ENCODE measurements at regions of chr5 and their contacts with region 1.

Region 1: GRCh38 chr5:88690409-88691229 is 192.4 kb downstream of the MEF2C start:
- DNase-seq: peak; percentile 82
- ATAC-seq: peak; percentile 82
- H3K4me3 Mint-ChIP-seq: peak overlapping the region; percentile 38
- H3K27ac Mint-ChIP-seq: no peak overlapping the region
- H3K4me1 Mint-ChIP-seq: peaks cover 15% of the 10 kb centered on the region
- H3K27me3 Mint-ChIP-seq: peaks cover 84% of the 10 kb centered on the region

Region 2: GRCh38 chr5:87421307-87421706 is 1269.3 kb before region 1 on chr5:
- CTCF ChIA-PET with region 1: interaction called, 3 read pairs
- POLR2A ChIA-PET with region 1: no interaction called
- intact Hi-C with region 1: loop called in 1 of 2 experiments (anchors 10 kb)
- DNase-seq: no peak
- ATAC-seq: no peak
- H3K4me3 Mint-ChIP-seq: no peak overlapping the region
- H3K27ac Mint-ChIP-seq: no peak overlapping the region
- H3K4me1 Mint-ChIP-seq: peaks cover 1% of the 10 kb centered on the region
- H3K27me3 Mint-ChIP-seq: no peaks in the 10 kb centered on the region

Region 3: DNA sequence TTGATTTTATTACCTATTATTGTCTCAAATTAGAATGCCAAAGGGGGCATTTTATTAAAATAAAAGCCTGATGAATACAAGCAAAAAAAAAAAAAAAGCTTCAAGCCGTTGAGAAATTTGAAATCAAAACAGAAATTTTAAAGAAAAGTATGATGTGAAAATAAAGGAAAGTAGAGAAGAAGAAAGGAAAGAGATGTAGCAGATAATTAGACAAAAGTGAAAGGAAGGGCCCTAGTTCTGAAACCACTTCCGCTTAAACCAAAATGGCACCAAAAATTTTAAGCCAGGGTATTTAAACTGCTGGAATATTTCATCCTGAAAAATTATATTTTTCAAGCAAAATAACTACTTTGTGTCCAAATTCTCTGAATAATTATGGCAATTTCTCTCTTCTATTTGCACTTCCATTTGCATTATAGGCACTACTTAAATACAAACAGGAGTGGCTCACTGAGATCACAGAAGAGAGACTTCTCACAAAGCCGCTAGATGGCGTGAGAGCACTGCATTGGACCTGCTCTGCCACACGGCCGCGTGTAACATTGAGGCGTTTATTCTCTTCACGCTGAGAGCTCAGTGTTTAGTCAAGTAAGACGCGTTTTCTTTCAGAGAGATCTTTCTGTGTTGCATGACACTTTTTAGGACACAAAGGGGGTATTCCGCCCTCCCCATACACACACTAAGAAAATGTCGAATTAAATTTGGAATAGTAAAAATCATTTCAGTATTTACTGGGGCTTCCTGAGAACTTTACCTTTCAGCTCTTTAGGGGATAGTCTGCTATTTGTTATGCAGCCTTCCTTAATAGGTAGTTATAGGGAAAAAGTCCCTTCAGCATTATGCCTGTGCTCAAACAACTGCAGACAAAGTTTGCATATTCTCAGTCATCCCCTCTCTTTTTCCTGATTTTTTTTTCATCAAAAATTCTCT is 909.5 kb before region 1 on chr5:
- CTCF ChIA-PET with region 1: interaction called, 59 read pairs
- POLR2A ChIA-PET with region 1: no interaction called
- intact Hi-C with region 1: loop called (anchors 1 kb)
- DNase-seq: peak; percentile 88
- ATAC-seq: peak; percentile 96
- H3K4me3 Mint-ChIP-seq: no peak overlapping the region
- H3K27ac Mint-ChIP-seq: no peak overlapping the region
- H3K4me1 Mint-ChIP-seq: no peaks in the 10 kb centered on the region
- H3K27me3 Mint-ChIP-seq: peaks cover 18% of the 10 kb centered on the region

Region 4: DNA sequence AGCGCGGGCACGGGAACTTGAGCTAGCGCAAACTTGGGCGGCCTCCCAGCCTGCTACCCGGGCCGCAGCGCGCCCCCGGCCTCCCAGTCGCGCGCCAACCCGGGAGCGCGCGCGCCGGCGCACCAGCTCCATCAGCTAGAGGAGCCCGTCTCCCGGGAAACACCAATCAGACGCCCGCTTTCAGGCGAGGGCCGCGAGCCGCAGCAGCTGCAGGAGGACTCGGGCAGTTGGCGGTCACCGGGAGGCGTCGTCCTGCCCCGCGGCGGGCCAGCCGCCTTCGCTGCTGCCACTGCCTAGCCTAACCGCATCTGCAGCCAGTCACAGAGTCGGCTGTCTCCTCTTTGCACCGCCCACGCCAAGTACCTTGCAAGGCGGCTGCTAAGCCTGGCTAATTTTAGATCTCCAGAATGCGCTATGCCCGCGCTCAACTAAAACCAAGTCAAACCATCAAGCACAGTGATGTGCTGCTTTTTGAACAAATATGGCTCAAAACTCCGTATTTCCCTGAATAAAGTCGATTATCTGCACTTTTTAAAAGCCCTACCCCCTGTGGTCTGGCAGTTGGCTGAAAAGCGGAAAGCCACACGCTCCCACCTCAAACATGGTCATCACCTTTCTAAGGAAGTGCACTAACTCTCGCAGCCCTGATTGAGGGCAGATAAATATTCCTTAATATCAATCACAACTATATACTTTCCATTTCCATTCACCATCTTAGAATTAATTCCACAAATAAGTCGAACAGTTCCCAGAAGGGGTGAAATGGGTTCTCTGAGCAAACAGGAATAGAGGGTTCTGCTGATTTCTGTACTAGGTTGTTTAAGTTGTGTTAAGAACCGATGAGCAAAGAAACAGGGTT is 29.4 kb before region 1 on chr5:
- CTCF ChIA-PET with region 1: interaction called, 15 read pairs
- POLR2A ChIA-PET with region 1: no interaction called
- intact Hi-C with region 1: loop called in 1 of 2 experiments (anchors 2 kb)
- DNase-seq: peak; percentile 71
- ATAC-seq: peak; percentile 72
- H3K4me3 Mint-ChIP-seq: peak overlapping the region; percentile 43
- H3K27ac Mint-ChIP-seq: no peak overlapping the region
- H3K4me1 Mint-ChIP-seq: peaks cover 16% of the 10 kb centered on the region
- H3K27me3 Mint-ChIP-seq: peaks cover 54% of the 10 kb centered on the region

Region 5: GRCh38 chr5:88666761-88667495 is 23.7 kb before region 1 on chr5:
- CTCF ChIA-PET with region 1: interaction called, 10 read pairs
- POLR2A ChIA-PET with region 1: no interaction called
- intact Hi-C with region 1: loop called in 1 of 2 experiments (anchors 2 kb)
- DNase-seq: peak; percentile 12
- ATAC-seq: peak; percentile 36
- H3K4me3 Mint-ChIP-seq: peak overlapping the region; percentile 64
- H3K27ac Mint-ChIP-seq: no peak overlapping the region
- H3K4me1 Mint-ChIP-seq: peaks cover 27% of the 10 kb centered on the region
- H3K27me3 Mint-ChIP-seq: peaks cover 74% of the 10 kb centered on the region

Region 6: DNA sequence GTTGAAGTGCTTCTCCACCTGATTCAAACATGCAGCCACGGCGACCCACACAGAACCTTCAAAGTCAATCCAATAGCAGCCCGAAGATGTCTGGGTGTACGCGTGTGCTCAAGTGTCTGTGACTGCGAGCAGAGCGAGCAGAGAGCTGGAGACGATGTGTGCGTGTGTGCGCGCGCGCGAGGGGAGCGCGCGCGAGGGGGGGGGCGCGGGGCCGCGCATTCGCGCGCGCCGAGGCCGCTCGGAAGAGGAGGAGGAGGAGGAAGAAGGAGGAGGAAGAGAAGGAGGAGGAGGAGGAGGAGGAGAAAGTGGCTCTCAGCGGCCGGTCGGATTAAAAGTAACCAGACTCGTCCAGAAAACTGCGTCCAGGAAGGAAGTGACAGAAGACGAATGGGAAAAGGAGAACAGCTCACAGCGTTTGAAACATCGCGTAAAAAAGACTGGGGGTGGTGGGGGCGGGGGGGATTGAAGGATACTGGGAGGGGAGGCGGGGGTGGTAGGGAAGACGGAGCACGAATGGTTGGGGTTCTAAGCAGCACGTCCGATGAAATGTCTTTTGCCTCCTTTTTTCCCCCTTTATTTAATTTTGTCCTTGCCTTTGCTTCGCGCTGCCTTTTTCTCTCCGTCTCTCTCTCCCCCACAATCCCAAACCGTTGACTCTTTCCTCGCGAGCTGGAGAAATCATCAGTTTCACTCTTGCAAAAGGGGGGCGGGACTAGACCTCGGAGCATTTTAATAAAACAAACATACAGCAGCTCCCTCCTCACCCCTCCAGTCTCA is 192.6 kb after region 1 on chr5 and contains the start of gene MEF2C:
- CTCF ChIA-PET with region 1: no interaction called
- POLR2A ChIA-PET with region 1: no interaction called
- intact Hi-C with region 1: loop called (anchors 5 to 10 kb)
- DNase-seq: peak; percentile 32
- ATAC-seq: peak; percentile 65
- H3K4me3 Mint-ChIP-seq: peak within 1 kb of the TSS; percentile 75
- H3K27ac Mint-ChIP-seq: no peak within 1 kb of the TSS
- H3K4me1 Mint-ChIP-seq: peaks cover 21% of the 10 kb centered on the region
- H3K27me3 Mint-ChIP-seq: peaks cover 48% of the 10 kb centered on the region
- total RNA-seq, gene MEF2C: 0.07 to 0.12 TPM